Activated CD4-positive, alpha-beta memory T cell treated with anti-CD3 and anti-CD28 coated beads for 36 hours (primary cell): ENCODE measurements at regions of chr10 and their contacts with region 1.

Region 1: GRCh38 chr10:74058658-74059057 is 60.7 kb downstream of the VCL start:
- DNase-seq: peak; percentile 38
- H3K4me3 Mint-ChIP-seq: no peak overlapping the region
- H3K27ac Mint-ChIP-seq: peak overlapping the region; percentile 16
- H3K4me1 Mint-ChIP-seq: peaks cover 33% of the 10 kb centered on the region
- H3K27me3 Mint-ChIP-seq: no peaks in the 10 kb centered on the region

Region 2: DNA sequence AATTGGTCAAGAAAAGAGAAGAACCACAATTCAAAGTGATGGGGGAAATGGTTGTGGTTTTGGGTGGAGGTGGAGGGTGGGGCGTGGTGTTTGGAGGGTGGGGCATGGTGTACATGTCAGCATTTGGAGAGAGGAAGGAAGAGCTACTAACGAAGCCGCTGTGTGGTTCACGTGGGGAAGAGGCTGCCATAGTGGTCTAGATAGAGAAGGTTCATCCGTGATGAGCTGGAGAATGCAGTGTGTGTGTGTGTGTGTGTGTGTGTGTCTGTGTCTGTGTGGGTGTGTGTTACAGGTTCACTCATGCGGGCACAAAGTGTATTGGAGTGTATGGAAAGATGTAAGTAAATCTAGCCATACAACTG is 66.8 kb before region 1 on chr10:
- CTCF ChIA-PET with region 1: interaction called, 3 read pairs
- POLR2A ChIA-PET with region 1: no interaction called
- intact Hi-C with region 1: loop called (anchors 2 kb)
- DNase-seq: peak; percentile 86
- H3K4me3 Mint-ChIP-seq: peak overlapping the region; percentile 2
- H3K27ac Mint-ChIP-seq: peak overlapping the region; percentile 55
- H3K4me1 Mint-ChIP-seq: peaks cover 31% of the 10 kb centered on the region
- H3K27me3 Mint-ChIP-seq: no peaks in the 10 kb centered on the region

Region 3: DNA sequence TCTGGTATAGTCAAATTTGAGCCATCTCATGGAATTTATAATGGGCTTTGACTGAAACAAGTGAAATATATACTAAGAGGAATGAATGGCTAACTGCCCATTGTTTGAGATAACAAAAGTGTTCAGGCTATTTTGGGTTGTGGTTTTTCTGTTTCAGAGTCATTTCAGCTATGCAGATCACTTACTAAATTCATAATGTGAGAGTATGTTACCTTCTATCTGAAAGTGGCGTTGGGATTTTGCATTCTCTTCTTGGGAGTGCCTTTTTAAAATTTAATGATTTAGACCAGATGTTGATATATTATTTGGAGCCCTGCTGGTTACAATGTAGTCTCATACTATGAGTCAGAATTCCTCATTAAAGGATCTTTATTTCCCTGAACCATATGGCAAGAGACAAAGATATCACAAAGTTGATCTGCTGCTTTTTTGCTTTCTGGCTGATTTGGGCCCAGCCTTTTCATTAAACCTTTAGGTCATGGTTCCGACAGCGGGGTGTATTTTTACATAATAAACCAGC is 50.4 kb before region 1 on chr10:
- CTCF ChIA-PET with region 1: no interaction called
- POLR2A ChIA-PET with region 1: no interaction called
- intact Hi-C with region 1: no loop called
- DNase-seq: no peak
- H3K4me3 Mint-ChIP-seq: no peak overlapping the region
- H3K27ac Mint-ChIP-seq: no peak overlapping the region
- H3K4me1 Mint-ChIP-seq: peaks cover 37% of the 10 kb centered on the region
- H3K27me3 Mint-ChIP-seq: no peaks in the 10 kb centered on the region